ENCODE measurements at regions of chr10 and their contacts with region 1.

Region 1: GRCh38 chr10:133318494-133319127 is 9.9 kb downstream of the ZNF511 start:
- DNase-seq: peak; percentile 69
- ATAC-seq: peak; percentile 91
- H3K4me3 Mint-ChIP-seq: peak overlapping the region; percentile 42
- H3K27ac Mint-ChIP-seq: no peak overlapping the region
- H3K4me1 Mint-ChIP-seq: peaks cover 13% of the 10 kb centered on the region
- H3K27me3 Mint-ChIP-seq: peaks cover 24% of the 10 kb centered on the region
- CTCF ChIP-seq: peak; percentile 22

Region 2: GRCh38 chr10:132939957-132940790 is 378.4 kb before region 1 on chr10:
- CTCF ChIA-PET with region 1: no interaction called
- POLR2A ChIA-PET with region 1: no interaction called
- intact Hi-C with region 1: loop called (anchors 2 kb)
- DNase-seq: no peak
- ATAC-seq: peak; percentile 69
- H3K4me3 Mint-ChIP-seq: peak overlapping the region; percentile 55
- H3K27ac Mint-ChIP-seq: peak overlapping the region; percentile 41
- H3K4me1 Mint-ChIP-seq: peaks cover 37% of the 10 kb centered on the region
- H3K27me3 Mint-ChIP-seq: peaks cover 38% of the 10 kb centered on the region
- CTCF ChIP-seq: no peak

Region 3: GRCh38 chr10:133039107-133039802 is 279.4 kb before region 1 on chr10:
- CTCF ChIA-PET with region 1: no interaction called
- POLR2A ChIA-PET with region 1: no interaction called
- intact Hi-C with region 1: no loop called
- DNase-seq: no peak
- ATAC-seq: no peak
- H3K4me3 Mint-ChIP-seq: no peak overlapping the region
- H3K27ac Mint-ChIP-seq: no peak overlapping the region
- H3K4me1 Mint-ChIP-seq: no peaks in the 10 kb centered on the region
- H3K27me3 Mint-ChIP-seq: no peaks in the 10 kb centered on the region
- CTCF ChIP-seq: no peak

Region 4: DNA sequence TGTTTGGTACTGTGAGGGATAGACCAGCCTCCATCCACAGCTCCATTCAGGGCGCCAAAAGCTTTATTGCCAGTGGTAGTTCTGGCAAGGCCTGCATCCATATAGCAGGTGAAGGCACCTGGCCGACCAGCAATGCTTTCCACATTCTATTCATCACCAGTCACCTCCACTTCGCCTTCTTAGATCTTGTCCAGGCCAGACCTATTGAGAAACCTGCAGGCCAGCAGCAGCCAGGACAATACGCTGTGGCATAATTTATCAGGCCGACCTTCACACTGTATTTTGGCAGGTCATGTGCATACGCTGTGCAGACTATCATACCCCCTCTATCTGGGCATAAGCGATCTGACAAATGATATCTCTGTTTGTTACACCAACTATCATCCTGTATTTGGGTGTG is 173.8 kb before region 1 on chr10:
- CTCF ChIA-PET with region 1: no interaction called
- POLR2A ChIA-PET with region 1: no interaction called
- intact Hi-C with region 1: loop called (anchors 1 kb)
- DNase-seq: no peak
- ATAC-seq: no peak
- H3K4me3 Mint-ChIP-seq: no peak overlapping the region
- H3K27ac Mint-ChIP-seq: no peak overlapping the region
- H3K4me1 Mint-ChIP-seq: peaks cover 7% of the 10 kb centered on the region
- H3K27me3 Mint-ChIP-seq: peaks cover 49% of the 10 kb centered on the region
- CTCF ChIP-seq: no peak

Region 5: DNA sequence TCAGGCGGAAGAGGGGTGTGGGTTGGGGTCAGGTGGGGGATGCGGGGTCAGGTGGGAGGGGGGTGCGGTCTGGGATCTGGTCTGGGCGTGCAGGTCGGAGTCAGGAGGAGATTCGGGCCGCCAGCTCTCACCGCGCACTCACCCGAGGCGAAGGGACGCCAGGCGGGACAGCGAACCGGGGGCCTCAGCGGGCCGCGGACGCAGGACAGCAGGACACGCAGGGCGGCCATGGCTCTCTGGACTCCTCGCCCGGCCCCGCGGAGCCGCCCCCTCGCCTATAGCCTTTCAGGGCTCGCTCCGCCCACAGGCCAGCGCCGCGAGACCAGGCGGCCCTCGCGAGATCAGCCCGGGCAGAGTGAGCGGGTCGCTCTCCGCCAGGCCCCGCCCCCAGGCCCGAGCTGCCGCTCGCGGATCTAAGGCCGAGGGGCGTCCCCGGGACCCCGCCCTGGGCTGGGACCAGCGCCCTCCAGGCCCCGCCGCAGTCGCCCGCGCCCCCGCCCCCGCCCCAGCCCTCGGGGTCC is 54.6 kb after region 1 on chr10 and contains the start of gene ECHS1:
- CTCF ChIA-PET with region 1: no interaction called
- POLR2A ChIA-PET with region 1: no interaction called
- intact Hi-C with region 1: no loop called
- DNase-seq: peak; percentile 96
- ATAC-seq: peak; percentile 96
- H3K4me3 Mint-ChIP-seq: peak within 1 kb of the TSS; percentile 83
- H3K27ac Mint-ChIP-seq: peak within 1 kb of the TSS; percentile 88
- H3K4me1 Mint-ChIP-seq: peaks cover 24% of the 10 kb centered on the region
- H3K27me3 Mint-ChIP-seq: no peaks in the 10 kb centered on the region
- CTCF ChIP-seq: no peak
- total RNA-seq, gene ECHS1: 37.7 and 39.4 TPM in 2 replicates